ENCODE measurements at regions of chr17 and their contacts with region 1.

Region 1: DNA sequence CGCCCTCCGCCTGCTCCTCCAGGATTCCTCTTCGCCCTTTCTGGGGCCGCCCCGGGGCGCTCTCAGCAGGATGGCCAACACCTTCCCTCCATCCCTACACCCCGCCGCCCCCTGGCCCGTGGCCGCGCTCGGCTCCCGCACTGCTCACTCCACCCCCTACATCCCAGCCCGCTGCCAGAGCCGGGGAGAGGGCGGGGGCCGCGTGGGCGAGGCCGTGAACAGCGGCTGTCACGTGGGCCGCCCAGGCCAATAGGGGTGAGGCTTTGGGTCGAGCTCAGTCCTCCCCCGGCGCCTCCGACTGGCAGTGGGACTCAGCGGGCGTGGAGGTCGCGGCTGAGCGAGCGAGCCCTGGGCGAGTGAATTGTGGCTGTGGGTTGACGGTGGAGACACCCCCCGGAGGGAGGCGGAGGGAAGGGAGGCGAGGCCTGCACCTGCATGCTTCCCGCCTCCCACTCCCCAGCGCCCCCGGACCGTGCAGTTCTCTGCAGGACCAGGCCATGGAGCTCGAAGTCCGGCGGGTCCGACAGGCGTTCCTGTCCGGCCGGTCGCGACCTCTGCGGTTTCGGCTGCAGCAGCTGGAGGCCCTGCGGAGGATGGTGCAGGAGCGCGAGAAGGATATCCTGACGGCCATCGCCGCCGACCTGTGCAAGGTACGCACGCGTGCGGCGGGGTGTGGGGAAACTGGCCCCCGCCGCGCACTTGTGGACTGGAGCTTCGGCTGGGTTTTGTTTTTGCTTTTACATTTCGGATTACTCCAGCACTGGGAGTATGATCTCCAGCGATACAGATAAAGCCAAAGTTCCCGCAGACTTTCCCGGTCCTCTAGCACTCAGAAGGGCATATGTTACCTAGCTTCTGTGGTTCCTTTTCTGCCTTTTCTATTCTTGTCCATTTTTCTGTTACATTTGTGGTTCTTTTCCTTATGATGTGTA is at the start of gene ALDH3A2:
- DNase-seq: peak; percentile 99
- ATAC-seq: peak; percentile 99
- total RNA-seq, gene ALDH3A2: 38.3 to 58.0 TPM

Region 2: GRCh38 chr17:19409509-19409908 is 239.2 kb before region 1 on chr17:
- intact Hi-C with region 1: no loop called
- DNase-seq: no peak
- ATAC-seq: no peak

Region 3: GRCh38 chr17:19513897-19514488 is 134.7 kb before region 1 on chr17:
- intact Hi-C with region 1: loop called in 1 of 2 experiments (anchors 5 kb)
- DNase-seq: peak; percentile 72
- ATAC-seq: peak; percentile 82 to 86